HEK293 (cell line): ENCODE measurements at regions of chr12 and their contacts with region 1.

Region 1: GRCh38 chr12:810671-811415 is 58.5 kb downstream of the WNK1 start:
- H3K4me3 ChIP-seq: no peak overlapping the region
- H3K27ac ChIP-seq: no peak overlapping the region
- H3K4me1 ChIP-seq: peaks cover 28% of the 10 kb centered on the region
- CTCF ChIP-seq: no peak

Region 2: DNA sequence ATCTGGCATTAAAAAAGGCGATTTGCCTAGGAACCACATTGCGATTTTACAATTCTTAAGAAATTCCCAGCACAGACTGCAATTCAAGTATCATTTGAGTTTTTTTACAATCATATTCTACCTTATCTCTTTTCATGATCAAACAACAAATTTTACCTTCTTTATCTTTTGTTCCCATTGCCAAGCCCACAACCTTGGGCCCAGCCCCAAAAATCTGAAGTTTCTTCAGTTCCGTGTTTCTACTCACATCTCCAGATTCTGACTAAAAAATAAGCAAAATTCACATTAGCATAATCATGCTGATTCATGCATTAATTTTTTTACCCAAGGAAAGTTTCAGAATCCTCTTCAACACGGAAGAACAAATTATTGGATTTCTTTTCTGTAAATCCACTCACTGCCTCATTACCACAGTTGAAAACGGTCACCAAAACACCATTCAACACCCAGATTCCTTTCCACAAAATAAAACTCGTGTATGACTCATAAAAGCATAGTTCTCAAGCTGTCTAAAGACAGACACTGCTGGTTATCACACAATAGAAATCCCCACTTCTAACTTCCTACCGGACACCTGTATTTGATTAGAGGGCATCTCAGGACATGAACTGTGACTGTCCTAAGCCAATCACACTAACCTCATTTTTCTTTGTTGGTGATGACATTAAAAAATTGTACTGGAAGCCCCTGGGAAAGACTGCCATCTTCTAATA is 454.4 kb before region 1 on chr12:
- CTCF ChIA-PET with region 1: no interaction called
- POLR2A ChIA-PET with region 1: no interaction called
- H3K4me3 ChIP-seq: no peak overlapping the region
- H3K27ac ChIP-seq: no peak overlapping the region
- H3K4me1 ChIP-seq: no peaks in the 10 kb centered on the region
- CTCF ChIP-seq: no peak

Region 3: GRCh38 chr12:569803-570434 is 240.9 kb before region 1 on chr12:
- CTCF ChIA-PET with region 1: interaction called, 41 read pairs
- POLR2A ChIA-PET with region 1: interaction called, 3 read pairs
- H3K4me3 ChIP-seq: peak overlapping the region; percentile 63
- H3K27ac ChIP-seq: peak overlapping the region; percentile 52; the same call in 1 of the 2 replicates
- H3K4me1 ChIP-seq: peaks cover 6% of the 10 kb centered on the region
- CTCF ChIP-seq: peak; percentile 97

Region 4: GRCh38 chr12:575948-576612 is 234.8 kb before region 1 on chr12:
- CTCF ChIA-PET with region 1: interaction called, 41 read pairs
- POLR2A ChIA-PET with region 1: interaction called, 3 read pairs
- H3K4me3 ChIP-seq: no peak overlapping the region
- H3K27ac ChIP-seq: peak overlapping the region; percentile 65
- H3K4me1 ChIP-seq: peaks cover 9% of the 10 kb centered on the region
- CTCF ChIP-seq: peak; percentile 96

Region 5: DNA sequence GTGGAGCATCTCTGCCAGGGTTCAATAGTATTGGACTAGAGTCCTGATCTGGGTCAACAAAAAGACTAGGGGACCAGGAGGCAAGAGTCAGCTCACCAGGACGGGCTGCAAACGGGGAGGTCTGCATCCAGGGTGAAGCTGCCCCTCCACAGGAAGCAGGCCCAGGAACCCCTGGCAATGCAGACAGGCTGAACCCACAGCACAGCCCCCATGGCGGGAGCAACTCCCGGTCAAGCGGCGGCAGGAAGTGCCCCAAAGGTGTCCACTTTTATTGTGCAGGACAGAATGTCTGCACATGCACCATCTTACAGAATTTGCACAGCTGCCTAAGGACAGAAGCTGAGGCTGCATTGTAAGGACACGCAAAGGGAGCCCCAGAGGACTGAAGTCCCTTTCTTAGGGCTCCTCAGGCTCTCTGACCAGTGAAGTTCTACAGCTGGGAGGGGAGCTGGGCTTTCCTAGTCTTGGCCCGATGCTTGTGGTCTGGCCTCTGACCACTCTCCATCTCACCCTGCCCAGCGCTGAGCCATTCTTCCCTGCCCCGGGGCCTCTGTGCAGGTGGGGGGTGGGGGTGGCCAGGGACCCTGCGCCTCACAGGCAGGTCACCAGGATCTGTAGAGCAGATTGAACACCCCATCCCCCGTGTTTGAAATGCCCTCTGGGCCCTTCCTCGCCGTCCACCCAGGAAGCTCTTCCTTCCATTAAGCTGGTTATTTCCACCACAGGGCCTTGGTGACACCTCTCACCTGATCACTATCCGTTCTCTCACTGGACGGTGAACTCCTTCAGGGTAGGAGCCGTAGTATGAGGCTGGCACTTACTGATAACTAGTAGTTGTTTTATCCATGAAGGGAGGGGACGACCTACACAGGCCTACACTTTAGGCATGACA is 223.5 kb before region 1 on chr12:
- CTCF ChIA-PET with region 1: no interaction called
- POLR2A ChIA-PET with region 1: no interaction called
- H3K4me3 ChIP-seq: no peak overlapping the region
- H3K27ac ChIP-seq: no peak overlapping the region
- H3K4me1 ChIP-seq: no peaks in the 10 kb centered on the region
- CTCF ChIP-seq: no peak

Region 6: DNA sequence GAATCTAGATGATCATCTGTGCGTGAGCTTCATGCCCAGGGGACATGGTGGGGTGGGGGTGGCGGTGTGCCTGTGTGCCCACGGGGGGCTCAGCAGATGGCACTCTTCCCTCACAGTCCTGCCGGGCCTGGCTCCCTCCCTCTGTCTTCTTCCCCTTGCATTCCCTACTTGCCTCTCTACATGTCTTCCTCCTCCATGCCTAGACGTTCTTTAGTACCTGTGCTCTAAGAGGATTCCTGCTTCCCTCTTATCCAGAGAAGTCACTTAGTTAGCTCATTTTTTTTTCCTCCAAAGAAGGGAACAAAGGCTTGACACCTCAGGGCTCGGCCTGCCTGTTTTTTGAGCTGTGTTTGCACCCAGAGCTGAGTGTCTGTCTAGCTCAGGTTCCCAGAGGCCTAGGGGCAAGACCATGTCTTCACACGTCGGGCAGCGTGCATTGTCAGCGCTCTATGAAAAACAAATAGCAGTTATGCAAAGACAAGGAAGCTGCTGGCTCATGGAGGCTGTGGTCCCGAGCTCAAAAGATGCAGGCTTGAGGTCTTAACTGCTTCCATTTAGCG is 196.4 kb before region 1 on chr12:
- CTCF ChIA-PET with region 1: interaction called, 18 read pairs
- POLR2A ChIA-PET with region 1: no interaction called
- H3K4me3 ChIP-seq: no peak overlapping the region
- H3K27ac ChIP-seq: no peak overlapping the region
- H3K4me1 ChIP-seq: no peaks in the 10 kb centered on the region
- CTCF ChIP-seq: peak; percentile 81

Region 7: DNA sequence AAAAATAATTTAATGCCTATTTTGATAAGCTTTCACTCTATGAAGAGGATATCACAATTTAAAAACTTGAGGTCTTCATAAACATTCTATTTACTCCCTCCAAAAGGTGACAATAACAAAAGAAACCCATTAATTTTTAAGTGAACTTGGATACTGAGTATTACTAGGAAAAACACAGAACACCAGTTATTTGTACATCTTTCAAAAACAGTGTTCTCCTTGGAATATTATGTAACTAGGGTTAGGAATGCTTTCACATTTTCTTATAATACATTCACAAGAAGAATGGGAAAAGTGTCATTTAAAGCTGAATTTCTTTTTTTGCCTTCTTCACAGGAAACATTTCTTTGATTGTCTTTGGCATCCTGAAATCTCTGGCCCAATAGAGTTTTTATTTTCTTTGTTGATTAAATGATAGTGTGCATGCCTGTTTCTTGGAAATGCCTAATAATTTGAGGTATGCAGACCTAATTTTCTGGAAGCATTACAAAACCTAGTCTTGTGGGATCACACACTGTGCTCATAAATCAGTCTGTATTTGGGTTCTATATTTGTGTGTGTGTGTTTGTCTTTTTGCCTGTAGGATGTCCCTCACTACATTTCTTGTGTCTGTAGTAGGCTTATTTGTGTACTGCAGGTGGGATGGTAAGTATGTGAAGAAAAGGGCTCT is 18.0 kb after region 1 on chr12:
- CTCF ChIA-PET with region 1: interaction called, 24 read pairs
- POLR2A ChIA-PET with region 1: no interaction called
- H3K4me3 ChIP-seq: no peak overlapping the region
- H3K27ac ChIP-seq: no peak overlapping the region
- H3K4me1 ChIP-seq: no peaks in the 10 kb centered on the region
- CTCF ChIP-seq: no peak

Region 8: GRCh38 chr12:835754-836518 is 25.1 kb after region 1 on chr12:
- CTCF ChIA-PET with region 1: interaction called, 13 read pairs
- POLR2A ChIA-PET with region 1: no interaction called
- H3K4me3 ChIP-seq: no peak overlapping the region
- H3K27ac ChIP-seq: no peak overlapping the region
- H3K4me1 ChIP-seq: no peaks in the 10 kb centered on the region
- CTCF ChIP-seq: no peak